Activated CD8-positive, alpha-beta T cell treated with anti-CD3 and anti-CD28 coated beads, Interleukin-2, amount 10 ng/mL, durations not matched to agents 7 days and 5 days (primary cell): ENCODE measurements at regions of chr3 and their contacts with region 1.

Region 1: DNA sequence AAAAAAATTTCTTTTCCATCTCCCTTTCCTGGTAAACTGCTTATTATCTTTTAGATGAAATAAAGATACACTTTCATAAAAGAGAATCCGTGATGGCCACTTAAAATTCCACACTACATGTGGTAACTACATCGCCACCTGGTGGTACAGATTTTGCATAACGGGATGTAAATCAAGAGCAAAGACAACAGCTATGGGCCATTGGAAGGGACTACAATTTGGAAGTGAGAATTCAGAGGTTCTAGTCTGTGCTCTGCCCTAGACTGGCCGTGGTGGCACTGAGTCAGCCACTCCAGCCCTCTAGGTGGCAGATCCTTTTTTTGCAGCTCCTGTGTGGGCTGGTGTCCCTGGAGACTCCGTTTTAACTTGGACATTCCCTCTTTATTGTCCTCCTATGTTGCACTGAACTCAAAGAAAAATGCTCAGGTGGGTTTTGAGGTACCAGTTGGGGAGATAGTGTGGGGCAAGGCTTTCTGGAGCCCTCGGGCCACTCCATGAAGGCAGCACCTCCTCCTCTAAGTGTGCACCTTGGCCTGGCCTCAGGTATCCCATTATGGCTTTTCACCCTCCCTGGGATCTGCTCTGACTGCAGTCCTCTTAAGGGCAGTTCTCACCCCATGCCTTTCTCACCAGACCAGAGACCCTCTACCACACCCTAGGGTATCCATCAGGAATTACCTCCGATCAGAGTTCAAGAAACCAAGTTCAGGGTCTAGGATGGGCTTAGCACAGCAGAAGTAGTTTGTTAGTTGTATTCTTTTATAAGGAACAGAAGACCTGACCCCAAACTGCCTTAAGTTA is 54.9 kb downstream of the SPSB4 start:
- DNase-seq: peak; percentile 80
- ATAC-seq: peak; percentile 61
- H3K4me3 Mint-ChIP-seq: no peak overlapping the region
- H3K27ac Mint-ChIP-seq: no peak overlapping the region
- H3K4me1 Mint-ChIP-seq: no peaks in the 10 kb centered on the region
- H3K27me3 Mint-ChIP-seq: peaks cover 3% of the 10 kb centered on the region

Region 2: GRCh38 chr3:140682586-140682985 is 423.4 kb before region 1 on chr3:
- CTCF ChIA-PET with region 1: no interaction called
- POLR2A ChIA-PET with region 1: no interaction called
- DNase-seq: no peak
- ATAC-seq: no peak
- H3K4me3 Mint-ChIP-seq: no peak overlapping the region
- H3K27ac Mint-ChIP-seq: no peak overlapping the region
- H3K4me1 Mint-ChIP-seq: peaks cover 4% of the 10 kb centered on the region
- H3K27me3 Mint-ChIP-seq: peaks cover 3% of the 10 kb centered on the region

Region 3: GRCh38 chr3:141011232-141011996 is 94.6 kb before region 1 on chr3:
- CTCF ChIA-PET with region 1: interaction called, 36 read pairs
- POLR2A ChIA-PET with region 1: no interaction called
- DNase-seq: peak; percentile 87
- ATAC-seq: peak; percentile 99
- H3K4me3 Mint-ChIP-seq: no peak overlapping the region
- H3K27ac Mint-ChIP-seq: no peak overlapping the region
- H3K4me1 Mint-ChIP-seq: peaks cover 12% of the 10 kb centered on the region
- H3K27me3 Mint-ChIP-seq: peaks cover 24% of the 10 kb centered on the region